ENCODE measurements at regions of chr4 and their contacts with region 1.

Region 1: DNA sequence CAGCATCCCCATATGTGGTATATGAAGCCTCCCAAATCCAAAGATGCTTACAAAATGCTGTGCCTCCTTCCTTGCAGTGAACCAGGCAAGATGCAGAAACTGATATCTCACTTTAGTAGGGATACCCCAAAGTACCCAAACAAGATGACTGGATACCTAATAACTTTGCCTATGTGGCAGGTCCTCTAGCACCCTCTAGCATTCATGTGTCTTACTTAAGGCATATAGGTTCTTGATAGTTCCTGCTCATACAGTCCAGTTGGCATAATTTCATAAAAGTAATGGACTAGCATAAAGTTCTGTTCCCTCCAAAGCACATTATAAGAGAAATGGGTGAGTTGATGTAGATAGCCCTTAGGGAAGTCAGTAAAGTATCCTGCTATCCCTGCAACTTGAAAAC is 36.8 kb upstream of the SPP1 start:
- DNase-seq: no peak
- ATAC-seq: no peak

Region 2: GRCh38 chr4:87926554-87927098 is 12.1 kb before region 1 on chr4:
- intact Hi-C with region 1: loop called (anchors 1 kb)
- DNase-seq: no peak
- ATAC-seq: no peak

Measured in Right ventricle myocardium inferior (tissue), 1 donor.